Heart left ventricle (tissue), 16 donors: ENCODE measurements at regions of chr2 and their contacts with region 1.

Region 1: DNA sequence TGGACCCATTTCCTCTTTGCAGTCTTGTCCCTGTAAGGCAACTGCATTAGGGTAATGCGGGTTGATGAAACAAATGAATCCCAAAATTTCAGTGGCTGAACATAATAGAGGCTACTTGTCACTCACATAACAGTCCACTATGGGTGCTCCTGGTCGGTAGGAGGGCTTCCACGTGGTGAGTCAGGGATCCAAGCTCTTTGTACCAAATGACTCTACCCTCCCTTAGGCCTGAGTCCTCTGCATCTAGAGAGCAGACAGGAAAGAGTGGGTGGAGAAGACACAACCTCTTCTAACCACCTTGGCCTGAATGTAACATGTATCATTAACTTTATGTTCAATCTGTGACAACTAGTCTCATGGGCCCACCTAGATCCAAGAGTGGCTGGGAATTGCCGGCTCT is 86.2 kb upstream of the HAAO start:
- DNase-seq: no peak
- ATAC-seq: no peak
- H3K4me3 ChIP-seq: no peak overlapping the region
- H3K27ac ChIP-seq: peak overlapping the region; percentile 3 to 93 (median 80)
- H3K4me1 ChIP-seq: peaks cover 6 to 84% (median 68%) of the 10 kb centered on the region in 12 donors
- H3K27me3 ChIP-seq: no peaks in the 10 kb centered on the region
- CTCF ChIP-seq: no peak
- POLR2A ChIP-seq: no peak

Region 2: GRCh38 chr2:42928692-42929545 is 50.3 kb after region 1 on chr2:
- intact Hi-C with region 1: loop called in 7 of 10 experiments (anchors 2 to 10 kb)
- DNase-seq: peak in 1 of 5 donors; percentile 55
- ATAC-seq: peak in 1 of 4 donors; percentile 8
- H3K4me3 ChIP-seq: no peak overlapping the region
- H3K27ac ChIP-seq: peak overlapping the region; percentile 74 to 98 (median 88)
- H3K4me1 ChIP-seq: peaks cover 33 to 100% (median 96%) of the 10 kb centered on the region in 12 donors
- H3K27me3 ChIP-seq: no peaks in the 10 kb centered on the region
- CTCF ChIP-seq: peak in 7 of 12 donors; percentile 22 to 54 (median 40)
- POLR2A ChIP-seq: no peak